B cell (primary cell): ENCODE measurements at regions of chr2 and their contacts with region 1.

Region 1: DNA sequence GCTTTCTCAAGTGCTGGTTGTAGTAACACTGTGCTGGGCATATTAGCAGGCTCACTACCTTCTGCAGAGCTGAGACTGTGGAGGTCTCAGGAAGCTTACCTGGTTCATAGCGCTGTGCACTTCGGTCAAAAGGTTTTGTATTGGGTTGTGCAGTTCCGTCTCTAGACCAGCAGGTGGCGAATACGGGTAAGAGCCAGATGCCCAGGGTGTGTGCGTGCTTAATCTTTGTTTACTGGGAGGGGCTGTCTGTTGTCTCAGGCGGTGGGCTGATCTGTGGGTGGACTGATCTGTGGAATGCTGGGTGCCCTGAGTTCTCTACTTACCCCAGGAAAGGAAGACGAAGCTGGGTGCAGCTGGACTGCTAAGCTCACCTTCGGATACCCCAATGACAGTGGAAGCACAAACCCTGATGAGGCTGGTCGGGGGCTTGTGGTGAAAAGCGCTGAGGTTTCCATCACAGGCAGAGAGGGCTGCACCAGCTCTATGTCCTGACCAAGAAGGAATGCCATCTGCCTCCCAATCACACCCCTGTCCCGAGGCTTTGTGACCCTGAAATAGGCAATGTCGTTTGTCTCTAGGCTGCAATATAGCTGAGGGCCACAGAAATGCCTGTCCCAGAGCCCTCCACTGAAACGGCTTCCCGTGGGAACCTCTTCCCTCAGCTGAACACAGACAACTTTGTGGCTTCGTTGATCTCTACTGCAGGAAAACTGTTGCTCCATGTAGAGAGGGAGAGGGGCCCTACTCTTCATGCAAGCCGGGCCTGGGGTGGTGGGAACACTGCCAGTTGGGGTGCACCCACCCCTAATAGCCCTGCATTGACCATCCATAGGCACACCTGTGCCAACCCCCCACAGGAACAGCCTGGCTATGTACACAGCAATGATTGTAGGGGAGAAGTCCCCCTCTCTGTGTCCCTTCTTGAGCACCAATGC is 45.9 kb upstream of the FAM117B start:
- DNase-seq: peak; percentile 85
- ATAC-seq: peak; percentile 99
- H3K4me3 ChIP-seq: peak overlapping the region in 1 of 5 experiments; percentile 21
- H3K4me3 Mint-ChIP-seq: peak overlapping the region; percentile 50
- H3K27ac ChIP-seq: no peak overlapping the region
- H3K27ac Mint-ChIP-seq: peak overlapping the region; percentile 43
- H3K4me1 ChIP-seq: peaks cover 9 to 12% of the 10 kb centered on the region in 2 donors
- H3K4me1 Mint-ChIP-seq: peaks cover 24% of the 10 kb centered on the region
- H3K27me3 ChIP-seq: no peaks in the 10 kb centered on the region
- H3K27me3 Mint-ChIP-seq: no peaks in the 10 kb centered on the region
- CTCF ChIP-seq: peak; percentile 86

Region 2: DNA sequence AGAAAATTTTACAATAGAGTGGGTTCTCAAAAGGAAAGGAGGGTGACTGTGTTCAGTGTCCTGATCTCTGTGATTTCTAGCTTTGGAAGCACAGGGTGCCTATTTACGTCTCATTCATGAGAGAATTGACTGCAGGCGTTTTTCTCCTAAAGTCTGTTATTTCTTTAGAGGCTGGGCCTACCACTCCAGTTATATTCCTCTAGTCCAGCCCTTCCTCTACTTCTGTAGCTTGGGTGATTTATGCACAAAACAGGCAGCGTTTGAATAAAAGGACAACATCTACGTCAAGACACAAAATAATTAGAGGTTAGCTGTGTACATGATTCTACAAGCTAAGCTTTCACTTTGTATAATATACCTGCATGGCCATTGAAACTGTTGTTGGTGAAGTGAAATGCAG is 13.4 kb after region 1 on chr2:
- CTCF ChIA-PET with region 1: interaction called, 25 read pairs
- POLR2A ChIA-PET with region 1: no interaction called
- intact Hi-C with region 1: no loop called
- DNase-seq: no peak
- ATAC-seq: no peak
- H3K4me3 ChIP-seq: no peak overlapping the region
- H3K4me3 Mint-ChIP-seq: no peak overlapping the region
- H3K27ac ChIP-seq: no peak overlapping the region
- H3K27ac Mint-ChIP-seq: no peak overlapping the region
- H3K4me1 ChIP-seq: peaks cover 4 to 16% of the 10 kb centered on the region in 2 donors
- H3K4me1 Mint-ChIP-seq: peaks cover 16% of the 10 kb centered on the region
- H3K27me3 ChIP-seq: no peaks in the 10 kb centered on the region
- H3K27me3 Mint-ChIP-seq: no peaks in the 10 kb centered on the region
- CTCF ChIP-seq: no peak

Region 3: GRCh38 chr2:202634556-202635427 is 45.9 kb after region 1 on chr2 and contains the start of gene FAM117B:
- CTCF ChIA-PET with region 1: interaction called, 57 read pairs
- POLR2A ChIA-PET with region 1: interaction called, 12 read pairs
- intact Hi-C with region 1: loop called (anchors 1 kb)
- DNase-seq: peak; percentile 98
- ATAC-seq: peak; percentile 86
- H3K4me3 ChIP-seq: peak within 1 kb of the TSS; percentile 73 to 98 (median 87)
- H3K4me3 Mint-ChIP-seq: peak within 1 kb of the TSS; percentile 99
- H3K27ac ChIP-seq: peak within 1 kb of the TSS; percentile 87 to 93
- H3K27ac Mint-ChIP-seq: peak within 1 kb of the TSS; percentile 100
- H3K4me1 ChIP-seq: peaks cover 40 to 43% of the 10 kb centered on the region in 2 donors
- H3K4me1 Mint-ChIP-seq: peaks cover 46% of the 10 kb centered on the region
- H3K27me3 ChIP-seq: no peaks in the 10 kb centered on the region
- H3K27me3 Mint-ChIP-seq: no peaks in the 10 kb centered on the region
- CTCF ChIP-seq: no peak
- total RNA-seq, gene FAM117B: 50.1 and 50.4 TPM in 2 replicates

Region 4: GRCh38 chr2:202695166-202695565 is 106.3 kb after region 1 on chr2:
- CTCF ChIA-PET with region 1: interaction called, 41 read pairs
- POLR2A ChIA-PET with region 1: no interaction called
- intact Hi-C with region 1: loop called (anchors 1 kb)
- DNase-seq: no peak
- ATAC-seq: no peak
- H3K4me3 ChIP-seq: no peak overlapping the region
- H3K4me3 Mint-ChIP-seq: no peak overlapping the region
- H3K27ac ChIP-seq: peak overlapping the region in 1 of 2 donors; percentile 34
- H3K27ac Mint-ChIP-seq: no peak overlapping the region
- H3K4me1 ChIP-seq: peaks cover 6 to 19% of the 10 kb centered on the region in 2 donors
- H3K4me1 Mint-ChIP-seq: peaks cover 45% of the 10 kb centered on the region
- H3K27me3 ChIP-seq: no peaks in the 10 kb centered on the region
- H3K27me3 Mint-ChIP-seq: no peaks in the 10 kb centered on the region
- CTCF ChIP-seq: no peak

Region 5: GRCh38 chr2:202718614-202719013 is 129.7 kb after region 1 on chr2:
- CTCF ChIA-PET with region 1: interaction called, 21 read pairs
- POLR2A ChIA-PET with region 1: no interaction called
- intact Hi-C with region 1: no loop called
- DNase-seq: no peak
- ATAC-seq: no peak
- H3K4me3 ChIP-seq: no peak overlapping the region
- H3K4me3 Mint-ChIP-seq: no peak overlapping the region
- H3K27ac ChIP-seq: peak overlapping the region in 1 of 2 donors; percentile 4
- H3K27ac Mint-ChIP-seq: peak overlapping the region; percentile 8
- H3K4me1 ChIP-seq: peaks cover 11 to 20% of the 10 kb centered on the region in 2 donors
- H3K4me1 Mint-ChIP-seq: peaks cover 44% of the 10 kb centered on the region
- H3K27me3 ChIP-seq: no peaks in the 10 kb centered on the region
- H3K27me3 Mint-ChIP-seq: no peaks in the 10 kb centered on the region
- CTCF ChIP-seq: no peak

Region 6: DNA sequence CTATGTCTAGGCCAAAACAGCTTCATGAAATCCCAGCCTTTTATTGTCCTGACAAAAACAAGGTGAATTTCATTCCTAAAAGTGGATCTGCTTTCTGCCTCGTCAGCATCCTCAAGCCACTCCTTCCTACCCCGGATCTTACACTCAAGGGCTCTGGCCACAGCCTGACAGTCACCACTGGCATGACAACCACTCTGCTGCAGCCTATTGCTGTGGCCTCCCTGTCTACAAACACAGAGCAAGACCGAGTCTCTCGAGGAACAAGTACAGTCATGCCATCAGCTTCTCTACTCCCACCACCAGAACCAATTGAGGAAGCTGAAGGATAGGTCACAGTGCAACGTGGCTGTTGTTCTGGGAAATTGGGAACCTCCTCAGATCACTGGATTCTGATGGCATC is 176.5 kb after region 1 on chr2:
- CTCF ChIA-PET with region 1: interaction called, 12 read pairs
- POLR2A ChIA-PET with region 1: no interaction called
- intact Hi-C with region 1: loop called (anchors 5 kb)
- DNase-seq: no peak
- ATAC-seq: no peak
- H3K4me3 ChIP-seq: no peak overlapping the region
- H3K4me3 Mint-ChIP-seq: no peak overlapping the region
- H3K27ac ChIP-seq: no peak overlapping the region
- H3K27ac Mint-ChIP-seq: peak overlapping the region; percentile 39
- H3K4me1 ChIP-seq: peaks cover 0 to 11% of the 10 kb centered on the region in 2 donors
- H3K4me1 Mint-ChIP-seq: peaks cover 24% of the 10 kb centered on the region
- H3K27me3 ChIP-seq: no peaks in the 10 kb centered on the region
- H3K27me3 Mint-ChIP-seq: no peaks in the 10 kb centered on the region
- CTCF ChIP-seq: no peak

Region 7: DNA sequence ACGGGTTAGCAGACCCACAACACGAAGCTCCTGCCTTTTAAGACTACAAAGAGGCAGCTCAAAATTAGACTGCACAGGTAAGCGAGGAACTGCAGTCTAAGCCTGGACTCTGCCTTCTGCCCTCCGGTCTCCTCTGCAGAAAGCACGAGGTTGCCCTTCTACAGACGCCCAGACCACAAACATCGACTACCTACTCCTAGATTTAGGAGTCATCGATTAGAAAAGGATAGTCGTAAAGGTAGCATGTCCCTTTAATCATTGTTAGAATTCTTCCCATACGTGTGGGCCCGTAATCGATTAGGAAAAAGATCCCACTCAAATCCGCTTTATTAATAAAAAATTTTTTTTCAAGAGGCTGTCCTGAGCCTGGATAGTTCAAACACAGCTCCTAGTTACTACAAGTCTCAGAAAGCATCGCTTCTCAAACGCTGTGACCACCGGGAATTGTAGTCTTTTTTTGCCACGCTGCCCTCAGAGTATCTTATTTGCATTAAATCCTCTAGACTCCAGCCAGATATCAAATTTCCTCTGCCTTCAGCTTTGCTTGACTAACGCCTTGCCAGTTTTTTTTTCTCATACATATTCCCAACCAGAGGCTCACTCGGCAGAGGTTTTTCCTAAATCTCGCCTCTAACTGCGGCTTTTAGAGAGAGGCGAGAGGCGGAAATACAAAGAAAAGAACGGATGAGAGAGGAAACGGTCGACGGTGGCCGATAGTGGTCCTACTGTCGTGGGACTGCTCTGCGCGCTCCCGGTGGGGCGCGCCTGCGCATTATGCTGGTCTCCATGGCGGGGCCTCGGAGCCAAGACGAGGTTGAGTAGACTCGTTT is 322.8 kb after region 1 on chr2 and contains the starts of genes CARF and WDR12:
- CTCF ChIA-PET with region 1: no interaction called
- POLR2A ChIA-PET with region 1: no interaction called
- intact Hi-C with region 1: loop called (anchors 5 kb)
- DNase-seq: peak; percentile 96
- ATAC-seq: peak; percentile 81
- H3K4me3 ChIP-seq: peak within 1 kb of the TSS; percentile 52 to 100 (median 97)
- H3K4me3 Mint-ChIP-seq: peak within 1 kb of the TSS; percentile 99
- H3K27ac ChIP-seq: peak within 1 kb of the TSS; percentile 67 to 83
- H3K27ac Mint-ChIP-seq: peak within 1 kb of the TSS; percentile 99
- H3K4me1 ChIP-seq: peaks cover 5 to 11% of the 10 kb centered on the region in 2 donors
- H3K4me1 Mint-ChIP-seq: peaks cover 24% of the 10 kb centered on the region
- H3K27me3 ChIP-seq: no peaks in the 10 kb centered on the region
- H3K27me3 Mint-ChIP-seq: no peaks in the 10 kb centered on the region
- CTCF ChIP-seq: no peak
- total RNA-seq, gene CARF: 27.5 and 28.4 TPM in 2 replicates
- total RNA-seq, gene WDR12: 17.4 and 20.8 TPM in 2 replicates